Left colon (tissue), 2 donors: ENCODE measurements at regions of chr9 and their contacts with region 1.

Region 1: DNA sequence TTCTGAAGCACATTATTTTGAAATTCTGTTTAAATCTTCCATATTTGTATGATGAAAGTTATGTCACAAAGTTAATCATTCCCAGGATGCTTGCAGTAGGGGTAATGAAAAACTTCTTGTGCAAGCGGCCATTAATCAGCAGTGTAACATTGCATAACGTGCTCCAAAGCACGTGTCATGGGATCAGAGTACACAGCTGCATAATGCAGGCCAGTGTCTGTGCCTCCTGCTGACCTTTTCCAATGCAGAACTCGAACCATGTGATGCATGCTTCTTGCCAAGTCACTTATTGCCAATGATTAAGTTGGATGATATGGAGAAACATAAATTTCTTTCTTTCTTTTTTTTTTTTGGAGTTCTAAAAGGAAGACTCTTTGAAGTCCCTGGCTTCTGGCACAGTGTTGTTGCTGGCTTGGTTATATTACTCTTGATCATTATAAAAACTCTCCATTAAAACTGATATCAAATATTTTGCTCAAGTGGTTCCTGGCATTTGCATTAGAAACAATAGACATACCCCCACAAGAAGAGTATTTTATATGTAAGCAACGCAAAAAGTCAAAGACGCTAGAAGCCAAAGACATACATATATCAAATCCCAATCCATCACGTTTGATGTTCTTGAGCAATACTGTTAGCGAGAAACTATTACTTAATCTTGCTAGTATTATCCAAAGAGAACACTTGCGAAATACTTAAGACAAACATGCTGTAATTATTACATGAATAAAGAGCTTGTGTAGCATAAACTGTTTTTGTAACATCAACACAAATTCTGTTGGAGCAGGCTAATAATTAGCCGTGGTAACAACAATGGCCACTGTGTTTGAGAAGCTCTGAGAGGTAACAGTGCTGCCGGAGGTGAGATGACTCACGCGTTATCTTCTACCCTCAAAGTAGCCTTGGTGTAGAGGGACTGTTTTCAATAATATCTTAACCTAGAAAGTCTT is 164.2 kb downstream of the AUH start:
- DNase-seq: peak; percentile 68 to 92
- ATAC-seq: peak; percentile 66

Region 2: DNA sequence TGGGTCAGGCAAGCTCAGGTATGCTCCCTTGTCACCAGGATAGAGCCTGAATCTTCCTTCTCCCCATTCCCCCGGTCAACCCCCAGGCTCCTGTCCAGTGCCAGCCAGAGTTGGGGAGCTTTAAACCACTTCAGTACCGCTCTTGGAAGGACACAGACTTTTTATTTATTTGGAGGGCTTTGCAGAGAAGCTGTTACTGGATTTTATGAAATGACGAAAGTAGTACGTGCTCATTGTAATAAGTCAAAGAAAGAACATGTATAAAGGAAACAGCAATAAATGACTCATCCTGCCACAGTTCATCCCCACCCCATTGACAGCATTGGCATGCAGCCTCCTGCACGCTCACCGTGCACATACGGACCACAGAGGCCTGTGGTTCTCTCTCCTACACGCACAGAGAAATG is 66.1 kb before region 1 on chr9:
- intact Hi-C with region 1: no loop called
- DNase-seq: peak; percentile 69 to 81
- ATAC-seq: peak; percentile 100

Region 3: GRCh38 chr9:91419222-91420191 is 222.0 kb after region 1 on chr9:
- intact Hi-C with region 1: loop called in 1 of 2 experiments (anchors 5 kb)
- DNase-seq: peak in 1 of 2 donors; percentile 52
- ATAC-seq: peak; percentile 7